ENCODE measurements at regions of chr1 and their contacts with region 1.

Region 1: GRCh38 chr1:205061665-205062069 is 18.7 kb downstream of the CNTN2 start:
- DNase-seq: peak; percentile 65 to 86
- ATAC-seq: no peak
- H3K4me3 ChIP-seq: no peak overlapping the region
- H3K27ac ChIP-seq: no peak overlapping the region
- H3K4me1 ChIP-seq: no peaks in the 10 kb centered on the region
- H3K27me3 ChIP-seq: no peaks in the 10 kb centered on the region

Region 2: DNA sequence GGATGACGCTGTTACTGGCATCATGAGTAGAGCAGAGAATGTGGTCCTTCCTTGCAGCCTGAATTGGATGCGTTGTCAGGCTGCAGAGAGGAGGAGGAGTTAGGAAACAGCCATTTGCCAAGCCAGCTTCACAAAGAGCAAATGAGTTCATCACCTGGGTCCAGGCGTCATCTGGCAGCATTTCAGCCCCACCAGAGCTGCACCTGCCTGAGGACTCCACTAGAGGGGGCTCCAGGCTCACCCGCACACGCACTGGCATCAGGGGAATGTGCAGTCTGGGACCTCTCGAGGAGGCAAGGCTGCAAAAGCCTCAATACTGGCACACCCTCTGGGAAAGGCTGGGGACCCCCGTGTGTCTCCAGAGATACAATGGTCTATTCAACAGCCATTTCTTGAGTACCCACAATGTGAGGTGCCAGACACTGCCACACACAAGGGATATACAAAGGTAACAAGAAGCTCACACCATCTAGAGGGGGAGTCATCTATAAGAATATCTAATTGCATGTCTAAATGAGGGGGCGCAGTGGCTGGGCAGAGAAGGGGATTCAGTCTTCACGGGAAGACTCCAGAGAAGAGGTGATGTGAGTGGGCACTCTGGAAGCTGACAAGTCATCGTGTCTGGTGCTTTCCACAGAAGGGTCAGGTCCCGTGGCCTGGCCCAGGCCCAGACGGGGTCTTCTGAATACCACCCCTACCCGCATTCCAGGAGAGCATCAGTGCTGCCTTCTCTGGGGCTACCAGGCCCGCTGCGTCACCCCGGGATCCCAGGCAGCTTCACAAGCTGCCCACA is 72.2 kb before region 1 on chr1:
- intact Hi-C with region 1: loop called in 1 of 2 experiments (anchors 5 kb)
- DNase-seq: no peak
- ATAC-seq: peak; percentile 82
- H3K4me3 ChIP-seq: no peak overlapping the region
- H3K27ac ChIP-seq: no peak overlapping the region
- H3K4me1 ChIP-seq: no peaks in the 10 kb centered on the region
- H3K27me3 ChIP-seq: no peaks in the 10 kb centered on the region

Region 3: DNA sequence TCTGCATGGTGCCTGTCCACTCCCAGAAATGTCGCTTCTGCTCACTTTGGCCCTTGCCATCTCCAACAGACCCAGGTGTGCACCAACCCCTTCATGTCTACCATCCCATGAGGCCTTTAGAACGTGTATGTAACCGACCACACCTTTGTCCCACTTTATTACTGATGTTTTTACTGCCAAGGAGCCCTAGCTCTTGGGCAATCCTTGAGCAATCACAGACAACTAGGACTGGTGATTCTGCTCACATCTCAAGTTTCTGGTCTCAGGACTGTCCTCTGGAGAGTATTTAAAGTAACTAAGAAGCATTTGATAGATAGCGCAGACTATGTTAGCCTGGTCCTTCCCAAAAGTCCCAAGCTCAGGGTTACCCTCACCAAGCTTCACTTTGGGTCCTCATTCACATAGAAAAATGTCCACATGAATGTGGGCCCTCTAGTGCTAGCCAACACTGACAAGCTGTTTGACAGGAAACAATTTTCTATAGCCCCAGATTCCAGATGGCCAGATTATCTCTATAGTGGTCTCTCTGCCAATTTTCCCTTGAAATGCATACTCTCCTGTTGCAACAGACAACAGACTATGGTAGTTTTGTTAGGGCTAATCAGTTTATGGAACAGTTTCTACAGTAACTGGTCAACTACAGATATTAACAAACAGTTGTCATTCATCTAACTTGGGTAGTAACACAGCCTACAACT is 29.5 kb after region 1 on chr1:
- intact Hi-C with region 1: no loop called
- DNase-seq: no peak
- ATAC-seq: no peak
- H3K4me3 ChIP-seq: no peak overlapping the region
- H3K27ac ChIP-seq: no peak overlapping the region
- H3K4me1 ChIP-seq: no peaks in the 10 kb centered on the region
- H3K27me3 ChIP-seq: no peaks in the 10 kb centered on the region

Region 4: DNA sequence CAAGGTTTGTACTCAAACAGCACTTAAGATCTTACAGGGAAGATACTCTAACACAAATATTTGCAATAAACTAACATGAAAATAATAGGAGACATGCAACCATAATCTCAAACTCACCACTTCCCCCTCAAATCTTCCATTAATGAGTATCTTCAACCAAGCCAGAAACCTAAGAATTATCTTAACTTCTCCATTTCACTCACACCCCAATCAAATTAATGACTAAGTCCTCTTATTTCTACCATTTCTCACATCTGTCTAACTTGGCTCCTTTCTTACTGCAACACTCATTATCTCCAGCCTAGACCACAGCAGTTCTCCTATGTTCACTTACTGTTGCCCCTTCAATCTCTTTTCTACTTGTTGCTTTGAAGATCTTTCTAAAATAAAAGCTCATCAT is 49.7 kb after region 1 on chr1:
- intact Hi-C with region 1: no loop called
- DNase-seq: no peak
- ATAC-seq: no peak
- H3K4me3 ChIP-seq: no peak overlapping the region
- H3K27ac ChIP-seq: no peak overlapping the region
- H3K4me1 ChIP-seq: no peaks in the 10 kb centered on the region
- H3K27me3 ChIP-seq: no peaks in the 10 kb centered on the region

Region 5: GRCh38 chr1:205150651-205151428 is 89.2 kb after region 1 on chr1:
- intact Hi-C with region 1: no loop called
- DNase-seq: no peak
- ATAC-seq: no peak
- H3K4me3 ChIP-seq: no peak overlapping the region
- H3K27ac ChIP-seq: no peak overlapping the region
- H3K4me1 ChIP-seq: no peaks in the 10 kb centered on the region
- H3K27me3 ChIP-seq: no peaks in the 10 kb centered on the region

Region 6: GRCh38 chr1:205260948-205261732 is 199.5 kb after region 1 on chr1:
- intact Hi-C with region 1: no loop called
- DNase-seq: no peak
- ATAC-seq: no peak
- H3K4me3 ChIP-seq: no peak overlapping the region
- H3K27ac ChIP-seq: no peak overlapping the region
- H3K4me1 ChIP-seq: no peaks in the 10 kb centered on the region
- H3K27me3 ChIP-seq: no peaks in the 10 kb centered on the region

Measured in aorta (tissue), 5 donors.